HEK293 (cell line): ENCODE measurements at regions of chr19 and their contacts with region 1.

Region 1: GRCh38 chr19:12484371-12485051 is at the start of gene ZNF709:
- H3K4me3 ChIP-seq: peak within 1 kb of the TSS; percentile 62
- H3K27ac ChIP-seq: peak within 1 kb of the TSS; percentile 42; the same call in 1 of the 2 replicates
- H3K4me1 ChIP-seq: no peaks in the 10 kb centered on the region
- CTCF ChIP-seq: 0 out of 2 replicates have a peak, but pooled peaks have one; percentile 21

Region 2: DNA sequence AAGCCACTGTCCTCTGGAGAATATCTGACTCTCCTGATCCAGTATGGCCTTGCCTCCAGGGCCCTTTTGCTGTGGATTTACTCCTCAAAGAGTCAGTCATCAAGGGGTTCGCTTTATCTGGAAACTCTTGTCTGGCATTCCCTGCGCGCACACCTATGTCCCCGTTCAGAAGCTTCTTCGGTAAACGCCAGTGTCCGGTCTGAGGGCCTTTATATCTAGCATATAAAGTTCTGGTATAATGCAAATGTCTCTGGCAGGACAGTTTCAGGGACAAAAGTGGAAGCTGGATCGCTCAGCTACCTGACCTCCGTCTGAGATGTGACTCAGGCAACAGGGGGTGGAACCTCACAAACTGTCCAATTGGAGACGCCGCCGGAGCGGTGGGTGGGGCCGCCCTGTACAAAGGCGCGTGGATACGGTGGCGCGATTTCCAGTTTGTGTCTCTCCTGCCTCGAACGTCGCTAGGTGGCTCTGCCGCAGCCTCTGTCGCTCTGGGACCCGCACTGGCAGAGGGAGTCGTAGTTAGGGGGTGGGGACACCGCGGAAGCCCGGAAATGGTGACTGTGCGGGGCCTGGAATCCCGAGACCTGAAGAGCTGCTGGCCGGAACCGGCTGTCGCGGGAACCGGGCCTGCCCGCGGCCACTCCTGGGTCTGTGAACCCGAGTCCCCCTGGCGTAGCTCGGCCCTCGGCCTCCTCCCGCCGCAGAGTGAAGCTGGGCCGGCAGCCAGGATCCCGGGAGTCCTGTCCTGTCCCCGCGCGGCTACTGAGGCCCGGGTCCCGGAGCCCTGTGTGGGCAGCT is 10.7 kb after region 1 on chr19:
- CTCF ChIA-PET with region 1: interaction called, 3 read pairs
- POLR2A ChIA-PET with region 1: interaction called, 32 read pairs
- H3K4me3 ChIP-seq: peak overlapping the region; percentile 65
- H3K27ac ChIP-seq: peak overlapping the region; percentile 65
- H3K4me1 ChIP-seq: no peaks in the 10 kb centered on the region
- CTCF ChIP-seq: peak; percentile 85